Heart right ventricle (tissue), 16 donors: ENCODE measurements at regions of chr2 and their contacts with region 1.

Region 1: GRCh38 chr2:159131914-159132281 is 154.6 kb downstream of the WDSUB1 start:
- DNase-seq: no peak
- ATAC-seq: peak in 3 of 8 donors; percentile 12 to 36 (median 18)
- H3K4me3 ChIP-seq: no peak overlapping the region
- H3K27ac ChIP-seq: peak overlapping the region in 9 of 10 donors; percentile 23 to 93 (median 66)
- H3K4me1 ChIP-seq: peaks cover 22 to 96% (median 80%) of the 10 kb centered on the region in 9 donors
- H3K27me3 ChIP-seq: no peaks in the 10 kb centered on the region
- CTCF ChIP-seq: no peak

Region 2: GRCh38 chr2:159157361-159158209 is 25.7 kb after region 1 on chr2:
- intact Hi-C with region 1: no loop called
- DNase-seq: no peak
- ATAC-seq: no peak
- H3K4me3 ChIP-seq: no peak overlapping the region
- H3K27ac ChIP-seq: peak overlapping the region in 1 of 10 donors; percentile 8
- H3K4me1 ChIP-seq: peaks cover 10 to 74% (median 55%) of the 10 kb centered on the region in 9 donors
- H3K27me3 ChIP-seq: no peaks in the 10 kb centered on the region
- CTCF ChIP-seq: no peak

Region 3: GRCh38 chr2:159199761-159200465 is 68.0 kb after region 1 on chr2:
- intact Hi-C with region 1: loop called in 1 of 10 experiments (anchors 5 kb)
- DNase-seq: no peak
- ATAC-seq: peak in 3 of 8 donors; percentile 24 to 27 (median 26)
- H3K4me3 ChIP-seq: no peak overlapping the region
- H3K27ac ChIP-seq: peak overlapping the region in 8 of 10 donors; percentile 29 to 74 (median 42)
- H3K4me1 ChIP-seq: peaks cover 0 to 73% (median 53%) of the 10 kb centered on the region in 9 donors
- H3K27me3 ChIP-seq: no peaks in the 10 kb centered on the region
- CTCF ChIP-seq: no peak